Stomach (tissue), 19 donors: ENCODE measurements at regions of chr10 and their contacts with region 1.

Region 1: DNA sequence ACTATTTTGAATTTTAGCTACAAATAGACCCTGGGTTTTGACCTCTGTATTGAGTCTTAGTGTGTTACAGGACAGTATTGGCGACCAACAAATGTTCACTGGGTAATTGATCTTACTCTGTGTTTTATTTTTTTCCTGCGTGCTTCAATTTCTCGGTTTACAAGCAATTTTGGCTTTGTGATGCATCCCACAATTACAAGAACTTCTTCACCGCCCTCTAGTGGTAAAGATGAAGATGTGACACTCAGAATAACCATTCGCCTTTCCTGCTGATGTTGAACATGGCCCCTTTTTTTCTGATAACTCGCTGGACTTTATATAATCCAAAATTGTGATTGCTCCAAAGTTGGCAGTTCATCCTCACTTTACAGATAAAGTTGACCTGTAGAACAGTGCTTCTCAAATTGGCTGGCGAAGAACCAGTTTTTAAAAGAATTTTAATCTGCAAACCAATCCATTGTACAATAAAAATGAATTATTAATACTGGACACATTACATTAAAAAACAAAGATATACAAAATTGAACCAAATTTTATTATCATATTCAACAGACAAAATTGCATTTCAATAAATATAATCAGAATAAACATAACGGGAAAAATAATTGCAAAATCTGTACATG is 20.2 kb upstream of the SMC3 start:
- DNase-seq: peak in 1 of 2 donors; percentile 78
- H3K4me3 ChIP-seq: no peak overlapping the region
- H3K27ac ChIP-seq: no peak overlapping the region
- H3K4me1 ChIP-seq: peaks cover 0 to 6% (median 0%) of the 10 kb centered on the region in 4 donors
- H3K27me3 ChIP-seq: peaks cover 0 to 15% (median 0%) of the 10 kb centered on the region in 3 donors
- CTCF ChIP-seq: peak in 5 of 7 experiments; percentile 66 to 82 (median 75)
- EP300 ChIP-seq: no peak
- POLR2A ChIP-seq: no peak

Region 2: DNA sequence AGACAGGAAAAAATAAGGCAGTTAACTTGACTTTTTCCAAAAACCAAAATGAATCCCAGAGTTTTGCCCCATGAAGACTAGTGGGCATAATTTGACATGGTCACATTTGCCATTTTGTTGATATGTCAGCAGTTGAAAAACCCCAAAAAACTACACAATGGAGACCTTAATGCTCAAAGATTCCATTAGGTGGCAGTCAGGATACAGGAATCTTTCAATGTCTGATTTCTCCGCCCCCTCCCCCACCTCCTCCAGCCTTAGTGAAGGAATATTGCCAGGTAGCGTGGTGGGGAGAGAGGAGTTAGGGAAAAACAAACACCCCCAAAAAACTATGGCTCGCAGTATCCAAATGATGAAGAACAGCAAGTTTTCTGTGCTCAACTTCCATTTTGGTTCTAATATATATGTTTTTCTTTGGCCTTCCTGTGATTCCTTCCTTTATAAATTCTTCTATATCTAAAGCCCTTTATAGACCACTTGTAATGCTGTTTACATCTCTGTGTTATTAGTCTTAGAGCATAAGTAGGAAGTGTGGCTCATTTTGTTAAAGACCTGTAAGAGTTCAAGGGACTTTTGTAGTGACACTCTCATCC is 235.8 kb before region 1 on chr10:
- intact Hi-C with region 1: loop called (anchors 5 kb)
- DNase-seq: peak; percentile 57 to 80
- H3K4me3 ChIP-seq: no peak overlapping the region
- H3K27ac ChIP-seq: no peak overlapping the region
- H3K4me1 ChIP-seq: peaks cover 0 to 12% (median under 1%) of the 10 kb centered on the region in 4 donors
- H3K27me3 ChIP-seq: no peaks in the 10 kb centered on the region
- CTCF ChIP-seq: peak in 5 of 7 experiments; percentile 32 to 73 (median 55)
- EP300 ChIP-seq: no peak
- POLR2A ChIP-seq: no peak